Activated B cell treated with CpG ODN at 0.5 μM for 24 hours (primary cell): ENCODE measurements at regions of chr2 and their contacts with region 1.

Region 1: DNA sequence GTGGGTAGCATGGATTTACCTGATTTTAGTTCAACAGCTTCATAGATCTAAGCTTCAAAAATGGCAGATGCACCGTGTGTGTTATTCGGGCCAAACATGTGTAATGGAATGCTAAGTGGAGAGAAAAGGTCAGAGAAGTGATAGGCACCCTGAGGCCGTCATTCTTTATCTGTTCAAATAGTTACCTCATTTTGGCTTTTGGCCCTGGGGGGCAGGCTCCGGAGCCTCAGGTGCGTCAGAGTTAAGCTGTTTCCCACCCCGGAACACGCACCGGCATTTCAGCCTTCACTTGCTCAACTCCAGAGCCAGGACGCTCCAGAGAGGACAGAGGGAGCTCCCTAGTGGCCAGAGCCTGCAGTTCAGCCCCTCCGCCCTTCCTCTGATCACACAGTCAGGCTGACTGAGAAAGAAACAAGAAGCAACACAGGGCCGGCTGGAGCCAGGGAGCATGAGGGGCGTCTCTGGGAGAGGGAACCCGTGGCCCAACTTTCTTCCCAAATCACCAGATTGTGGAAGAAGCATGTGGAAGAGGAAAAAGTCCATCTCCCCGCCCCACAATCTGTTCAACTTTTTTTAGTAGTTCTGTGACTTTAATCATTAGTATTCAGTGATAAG is 135.2 kb upstream of the EPC2 start:
- DNase-seq: peak; percentile 63
- ATAC-seq: peak; percentile 100
- H3K4me3 Mint-ChIP-seq: peak overlapping the region; percentile 70
- H3K27ac Mint-ChIP-seq: peak overlapping the region; percentile 32
- H3K4me1 Mint-ChIP-seq: peaks cover 12% of the 10 kb centered on the region
- H3K27me3 Mint-ChIP-seq: no peaks in the 10 kb centered on the region
- CTCF ChIP-seq: peak; percentile 43

Region 2: GRCh38 chr2:147937744-147938349 is 571.5 kb before region 1 on chr2:
- CTCF ChIA-PET with region 1: interaction called, 9 read pairs
- POLR2A ChIA-PET with region 1: no interaction called
- intact Hi-C with region 1: loop called (anchors 1 kb)
- DNase-seq: no peak
- ATAC-seq: peak; percentile 37
- H3K4me3 Mint-ChIP-seq: no peak overlapping the region
- H3K27ac Mint-ChIP-seq: no peak overlapping the region
- H3K4me1 Mint-ChIP-seq: no peaks in the 10 kb centered on the region
- H3K27me3 Mint-ChIP-seq: no peaks in the 10 kb centered on the region
- CTCF ChIP-seq: peak; percentile 95

Region 3: GRCh38 chr2:148020111-148021058 is 489.0 kb before region 1 on chr2 and contains the start of gene ORC4:
- CTCF ChIA-PET with region 1: interaction called, 7 read pairs
- POLR2A ChIA-PET with region 1: interaction called, 10 read pairs
- intact Hi-C with region 1: loop called (anchors 1 kb)
- DNase-seq: peak; percentile 78
- ATAC-seq: peak; percentile 89
- H3K4me3 Mint-ChIP-seq: peak within 1 kb of the TSS; percentile 100
- H3K27ac Mint-ChIP-seq: peak within 1 kb of the TSS; percentile 95
- H3K4me1 Mint-ChIP-seq: peaks cover 71% of the 10 kb centered on the region
- H3K27me3 Mint-ChIP-seq: no peaks in the 10 kb centered on the region
- CTCF ChIP-seq: no peak
- total RNA-seq, gene ORC4: 28.2 and 30.7 TPM in 2 replicates

Region 4: GRCh38 chr2:148493822-148494563 is 15.4 kb before region 1 on chr2:
- CTCF ChIA-PET with region 1: interaction called, 17 read pairs
- POLR2A ChIA-PET with region 1: no interaction called
- intact Hi-C with region 1: no loop called
- DNase-seq: no peak
- ATAC-seq: peak; percentile 60
- H3K4me3 Mint-ChIP-seq: peak overlapping the region; percentile 78
- H3K27ac Mint-ChIP-seq: peak overlapping the region; percentile 93
- H3K4me1 Mint-ChIP-seq: peaks cover 40% of the 10 kb centered on the region
- H3K27me3 Mint-ChIP-seq: no peaks in the 10 kb centered on the region
- CTCF ChIP-seq: no peak

Region 5: GRCh38 chr2:149561309-149561926 is 1052.0 kb after region 1 on chr2:
- CTCF ChIA-PET with region 1: interaction called, 3 read pairs
- POLR2A ChIA-PET with region 1: no interaction called
- intact Hi-C with region 1: loop called (anchors 10 kb)
- DNase-seq: no peak
- ATAC-seq: peak; percentile 31
- H3K4me3 Mint-ChIP-seq: no peak overlapping the region
- H3K27ac Mint-ChIP-seq: no peak overlapping the region
- H3K4me1 Mint-ChIP-seq: peaks cover 8% of the 10 kb centered on the region
- H3K27me3 Mint-ChIP-seq: no peaks in the 10 kb centered on the region
- CTCF ChIP-seq: peak; percentile 100